Natural killer cell (primary cell): ENCODE measurements at regions of chr7 and their contacts with region 1.

Region 1: GRCh38 chr7:118183786-118184564 is at the start of gene LSM8:
- DNase-seq: peak; percentile 95 to 100
- ATAC-seq: peak; percentile 96 to 99 (median 97)
- H3K4me3 ChIP-seq: peak within 1 kb of the TSS; percentile 78
- H3K4me3 Mint-ChIP-seq: peak within 1 kb of the TSS; percentile 97
- H3K27ac ChIP-seq: peak within 1 kb of the TSS; percentile 96
- H3K27ac Mint-ChIP-seq: peak within 1 kb of the TSS; percentile 97 to 98
- H3K4me1 ChIP-seq: peaks cover 11% of the 10 kb centered on the region
- H3K4me1 Mint-ChIP-seq: peaks cover 45% of the 10 kb centered on the region in 2 donors
- H3K27me3 ChIP-seq: no peaks in the 10 kb centered on the region
- H3K27me3 Mint-ChIP-seq: peaks cover 0 to 3% of the 10 kb centered on the region in 2 donors
- CTCF ChIP-seq: no peak
- total RNA-seq, gene LSM8: 43.5 to 55.8 (median 44.7) TPM

Region 2: GRCh38 chr7:116218051-116218645 is 1965.8 kb before region 1 on chr7:
- intact Hi-C with region 1: loop called (anchors 5 kb)
- DNase-seq: no peak
- ATAC-seq: peak; percentile 34 to 53 (median 36)
- H3K4me3 ChIP-seq: no peak overlapping the region
- H3K4me3 Mint-ChIP-seq: peak overlapping the region; percentile 83
- H3K27ac ChIP-seq: peak overlapping the region; percentile 64
- H3K27ac Mint-ChIP-seq: peak overlapping the region; percentile 84 to 99
- H3K4me1 ChIP-seq: peaks cover 31% of the 10 kb centered on the region
- H3K4me1 Mint-ChIP-seq: peaks cover 87 to 91% of the 10 kb centered on the region in 2 donors
- H3K27me3 ChIP-seq: no peaks in the 10 kb centered on the region
- H3K27me3 Mint-ChIP-seq: no peaks in the 10 kb centered on the region
- CTCF ChIP-seq: no peak

Region 3: GRCh38 chr7:117362294-117362888 is 821.6 kb before region 1 on chr7:
- intact Hi-C with region 1: no loop called
- DNase-seq: no peak
- ATAC-seq: no peak
- H3K4me3 ChIP-seq: no peak overlapping the region
- H3K4me3 Mint-ChIP-seq: no peak overlapping the region
- H3K27ac ChIP-seq: no peak overlapping the region
- H3K27ac Mint-ChIP-seq: no peak overlapping the region
- H3K4me1 ChIP-seq: no peaks in the 10 kb centered on the region
- H3K4me1 Mint-ChIP-seq: no peaks in the 10 kb centered on the region
- H3K27me3 ChIP-seq: no peaks in the 10 kb centered on the region
- H3K27me3 Mint-ChIP-seq: no peaks in the 10 kb centered on the region
- CTCF ChIP-seq: no peak

Region 4: DNA sequence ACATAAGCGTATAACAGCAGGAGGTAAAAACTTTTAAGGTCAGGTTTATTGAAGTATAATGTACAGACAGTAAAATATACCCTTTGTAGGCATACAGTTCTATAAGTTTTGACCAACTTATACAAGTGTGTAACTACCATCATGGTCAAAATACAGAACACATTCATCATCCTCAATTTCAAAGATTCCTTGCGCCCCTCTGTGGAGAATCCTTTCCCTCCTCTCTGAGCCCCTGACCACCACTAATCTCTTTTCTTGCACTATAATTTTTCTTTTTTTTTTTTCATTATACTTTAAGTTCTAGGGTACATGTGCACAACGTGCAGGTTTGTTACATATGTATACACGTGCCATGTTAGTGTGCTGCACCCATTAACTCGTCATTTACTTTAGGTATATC is 252.7 kb before region 1 on chr7:
- intact Hi-C with region 1: no loop called
- DNase-seq: no peak
- ATAC-seq: no peak
- H3K4me3 ChIP-seq: no peak overlapping the region
- H3K4me3 Mint-ChIP-seq: no peak overlapping the region
- H3K27ac ChIP-seq: no peak overlapping the region
- H3K27ac Mint-ChIP-seq: no peak overlapping the region
- H3K4me1 ChIP-seq: no peaks in the 10 kb centered on the region
- H3K4me1 Mint-ChIP-seq: no peaks in the 10 kb centered on the region
- H3K27me3 ChIP-seq: no peaks in the 10 kb centered on the region
- H3K27me3 Mint-ChIP-seq: no peaks in the 10 kb centered on the region
- CTCF ChIP-seq: no peak

Region 5: GRCh38 chr7:118214051-118214832 is 30.3 kb after region 1 on chr7:
- intact Hi-C with region 1: loop called (anchors 1 kb)
- DNase-seq: peak; percentile 54 to 87
- ATAC-seq: peak; percentile 78 to 95 (median 88)
- H3K4me3 ChIP-seq: peak overlapping the region; percentile 52
- H3K4me3 Mint-ChIP-seq: peak overlapping the region; percentile 85
- H3K27ac ChIP-seq: no peak overlapping the region
- H3K27ac Mint-ChIP-seq: peak overlapping the region; percentile 43 to 73
- H3K4me1 ChIP-seq: peaks cover 9% of the 10 kb centered on the region
- H3K4me1 Mint-ChIP-seq: peaks cover 11 to 13% of the 10 kb centered on the region in 2 donors
- H3K27me3 ChIP-seq: peaks cover 4% of the 10 kb centered on the region
- H3K27me3 Mint-ChIP-seq: peaks cover 0 to 19% of the 10 kb centered on the region in 2 donors
- CTCF ChIP-seq: no peak

Region 6: DNA sequence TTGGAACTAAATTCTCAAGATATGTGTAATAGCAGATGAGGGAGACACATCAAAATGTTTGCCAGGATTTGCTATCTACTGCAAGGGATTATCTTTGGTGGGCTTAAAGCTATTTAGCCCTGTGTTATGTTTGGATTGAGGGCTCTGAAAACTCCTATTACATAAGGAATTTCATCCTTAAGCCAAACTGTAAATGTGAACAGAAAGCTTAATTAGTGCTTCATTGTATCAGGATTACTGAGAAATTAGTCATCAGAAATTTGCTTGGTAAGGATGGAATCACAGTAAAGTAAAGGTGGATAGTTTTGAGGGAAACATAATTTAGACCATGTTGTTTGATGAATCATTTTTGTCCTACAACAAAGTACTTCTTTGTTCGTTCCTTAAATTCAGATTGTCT is 48.9 kb after region 1 on chr7:
- intact Hi-C with region 1: no loop called
- DNase-seq: no peak
- ATAC-seq: no peak
- H3K4me3 ChIP-seq: no peak overlapping the region
- H3K4me3 Mint-ChIP-seq: no peak overlapping the region
- H3K27ac ChIP-seq: no peak overlapping the region
- H3K27ac Mint-ChIP-seq: no peak overlapping the region
- H3K4me1 ChIP-seq: no peaks in the 10 kb centered on the region
- H3K4me1 Mint-ChIP-seq: no peaks in the 10 kb centered on the region
- H3K27me3 ChIP-seq: no peaks in the 10 kb centered on the region
- H3K27me3 Mint-ChIP-seq: peaks cover 6% of the 10 kb centered on the region in 2 donors
- CTCF ChIP-seq: no peak

Region 7: DNA sequence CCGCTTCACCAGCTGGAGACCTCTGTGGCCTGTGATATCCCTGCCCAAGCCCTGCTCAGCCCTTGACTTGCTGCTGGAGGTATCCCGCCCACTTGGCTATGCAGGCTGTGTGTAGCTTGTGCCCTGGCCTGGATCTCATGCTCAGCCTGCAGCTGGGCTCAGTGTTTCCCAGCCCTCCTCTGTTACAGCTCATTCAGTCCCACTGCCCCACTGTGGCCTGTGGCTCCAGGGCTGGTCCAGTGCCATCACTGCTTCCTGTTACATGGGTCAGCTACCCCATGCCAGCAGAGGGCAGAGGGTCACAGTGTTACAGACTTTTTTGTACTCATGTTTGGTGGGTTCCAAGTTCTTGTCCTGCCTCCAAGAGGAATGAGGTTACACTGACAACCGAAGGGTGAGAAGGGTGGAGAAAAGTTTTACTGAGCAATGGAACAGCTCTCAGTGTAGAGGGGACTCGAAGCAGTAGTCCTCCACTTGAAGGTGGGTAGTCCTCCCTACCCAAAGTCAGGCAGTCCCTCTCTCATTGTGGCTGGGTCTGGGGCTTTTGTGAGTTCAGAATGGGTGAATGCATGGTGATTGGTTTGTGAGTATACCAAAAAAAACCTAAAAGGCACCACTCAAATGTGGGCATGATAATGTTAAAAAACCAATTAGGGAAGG is 140.9 kb after region 1 on chr7:
- intact Hi-C with region 1: no loop called
- DNase-seq: no peak
- ATAC-seq: no peak
- H3K4me3 ChIP-seq: no peak overlapping the region
- H3K4me3 Mint-ChIP-seq: no peak overlapping the region
- H3K27ac ChIP-seq: no peak overlapping the region
- H3K27ac Mint-ChIP-seq: no peak overlapping the region
- H3K4me1 ChIP-seq: no peaks in the 10 kb centered on the region
- H3K4me1 Mint-ChIP-seq: no peaks in the 10 kb centered on the region
- H3K27me3 ChIP-seq: no peaks in the 10 kb centered on the region
- H3K27me3 Mint-ChIP-seq: no peaks in the 10 kb centered on the region
- CTCF ChIP-seq: no peak